Heart left ventricle (tissue), 16 donors: ENCODE measurements at regions of chr6 and their contacts with region 1.

Region 1: DNA sequence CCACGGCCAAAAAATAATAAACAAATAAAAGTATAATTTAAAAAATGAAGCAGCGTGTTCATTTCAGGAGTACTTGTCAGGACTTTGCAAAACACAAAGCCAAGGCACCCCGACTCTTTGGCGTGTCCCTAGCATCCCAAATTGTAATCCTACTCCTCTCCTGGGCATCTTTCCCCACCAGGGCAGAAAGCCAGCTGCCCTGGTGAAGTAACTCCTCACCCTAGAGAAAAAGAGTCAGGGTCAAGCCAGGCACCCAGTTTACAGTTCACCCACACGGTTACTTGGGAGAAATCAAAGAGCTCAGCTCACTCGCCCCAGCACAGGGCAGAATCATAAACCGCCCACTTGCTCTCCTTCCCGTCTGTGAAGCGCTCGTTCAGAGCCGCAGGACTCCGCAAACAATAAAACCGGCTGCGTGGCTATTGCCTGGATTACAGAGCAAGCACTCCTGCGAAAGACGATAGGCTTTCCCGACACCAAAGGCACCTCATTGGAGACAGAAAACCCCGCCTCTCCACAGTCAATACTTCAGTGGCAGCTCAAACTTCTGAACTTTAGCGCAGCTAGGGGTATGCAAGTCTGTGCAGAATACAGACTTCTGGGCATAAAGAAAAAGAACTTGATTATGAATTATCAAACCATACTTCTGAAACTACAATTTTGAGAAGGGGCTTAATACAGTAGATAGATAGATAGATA is 73.0 kb upstream of the NHSL1 start:
- DNase-seq: peak; percentile 68 to 82 (median 72)
- ATAC-seq: peak; percentile 85 to 92 (median 92)
- H3K4me3 ChIP-seq: peak overlapping the region; percentile 21 to 61 (median 50)
- H3K27ac ChIP-seq: peak overlapping the region in 11 of 12 donors; percentile 29 to 81 (median 71)
- H3K4me1 ChIP-seq: peaks cover 0 to 24% (median 4%) of the 10 kb centered on the region in 12 donors
- H3K27me3 ChIP-seq: peaks cover 0 to 3% (median 0%) of the 10 kb centered on the region in 9 donors
- CTCF ChIP-seq: no peak
- POLR2A ChIP-seq: peak in 1 of 2 donors; percentile 53

Region 2: GRCh38 chr6:138250513-138251247 is 321.6 kb before region 1 on chr6:
- intact Hi-C with region 1: no loop called
- DNase-seq: peak in 4 of 5 donors; percentile 13 to 43 (median 30)
- ATAC-seq: peak in 3 of 4 donors; percentile 73 to 83 (median 79)
- H3K4me3 ChIP-seq: peak overlapping the region in 3 of 12 donors; percentile 9 to 11 (median 10)
- H3K27ac ChIP-seq: peak overlapping the region in 2 of 12 donors; percentile 19 to 48
- H3K4me1 ChIP-seq: peaks cover 0 to 4% (median 0%) of the 10 kb centered on the region in 12 donors
- H3K27me3 ChIP-seq: no peaks in the 10 kb centered on the region
- CTCF ChIP-seq: no peak
- POLR2A ChIP-seq: no peak

Region 3: DNA sequence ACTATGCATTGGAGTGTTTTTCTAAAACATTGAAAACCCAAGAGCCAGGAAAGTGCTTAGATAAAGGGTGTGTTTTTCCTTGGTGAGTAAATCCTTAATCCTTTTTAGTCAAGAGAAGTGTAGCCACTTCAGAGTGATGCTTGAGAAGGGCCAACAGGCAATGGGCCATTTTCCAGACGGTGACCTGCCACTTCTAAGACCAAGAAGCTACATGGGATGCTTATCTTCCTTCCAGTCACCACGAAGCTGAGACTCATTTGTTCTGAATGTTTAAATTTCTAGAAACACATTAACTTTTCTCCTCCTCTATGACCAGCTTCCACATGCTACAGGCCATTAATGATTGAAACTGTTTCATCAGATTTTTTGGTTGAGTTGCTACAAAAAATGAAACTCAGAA is 38.6 kb before region 1 on chr6:
- intact Hi-C with region 1: no loop called
- DNase-seq: no peak
- ATAC-seq: no peak
- H3K4me3 ChIP-seq: no peak overlapping the region
- H3K27ac ChIP-seq: no peak overlapping the region
- H3K4me1 ChIP-seq: peaks cover 0 to 56% (median 21%) of the 10 kb centered on the region in 12 donors
- H3K27me3 ChIP-seq: no peaks in the 10 kb centered on the region
- CTCF ChIP-seq: no peak
- POLR2A ChIP-seq: no peak

Region 4: GRCh38 chr6:138545621-138545980 is 26.7 kb before region 1 on chr6:
- intact Hi-C with region 1: loop called in 1 of 10 experiments (anchors 2 kb)
- DNase-seq: peak; percentile 81 to 92 (median 89)
- ATAC-seq: peak; percentile 93 to 97 (median 94)
- H3K4me3 ChIP-seq: peak overlapping the region in 11 of 12 donors; percentile 18 to 64 (median 52)
- H3K27ac ChIP-seq: peak overlapping the region; percentile 3 to 92 (median 80)
- H3K4me1 ChIP-seq: peaks cover 0 to 50% (median 31%) of the 10 kb centered on the region in 12 donors
- H3K27me3 ChIP-seq: no peaks in the 10 kb centered on the region
- CTCF ChIP-seq: no peak
- POLR2A ChIP-seq: peak in 1 of 2 donors; percentile 72